ENCODE measurements at regions of chr11 and their contacts with region 1.

Region 1: GRCh38 chr11:87352759-87353707 is 315.3 kb downstream of the TMEM135 start:
- DNase-seq: peak; percentile 13
- H3K4me3 ChIP-seq: no peak overlapping the region
- H3K27me3 ChIP-seq: no peaks in the 10 kb centered on the region; the same call in 1 of the 2 replicates
- CTCF ChIP-seq: peak; percentile 97

Region 2: GRCh38 chr11:87173185-87174039 is 179.6 kb before region 1 on chr11:
- CTCF ChIA-PET with region 1: no interaction called
- POLR2A ChIA-PET with region 1: no interaction called
- DNase-seq: peak; percentile 37
- H3K4me3 ChIP-seq: no peak overlapping the region
- H3K27me3 ChIP-seq: no peaks in the 10 kb centered on the region
- CTCF ChIP-seq: no peak

Region 3: DNA sequence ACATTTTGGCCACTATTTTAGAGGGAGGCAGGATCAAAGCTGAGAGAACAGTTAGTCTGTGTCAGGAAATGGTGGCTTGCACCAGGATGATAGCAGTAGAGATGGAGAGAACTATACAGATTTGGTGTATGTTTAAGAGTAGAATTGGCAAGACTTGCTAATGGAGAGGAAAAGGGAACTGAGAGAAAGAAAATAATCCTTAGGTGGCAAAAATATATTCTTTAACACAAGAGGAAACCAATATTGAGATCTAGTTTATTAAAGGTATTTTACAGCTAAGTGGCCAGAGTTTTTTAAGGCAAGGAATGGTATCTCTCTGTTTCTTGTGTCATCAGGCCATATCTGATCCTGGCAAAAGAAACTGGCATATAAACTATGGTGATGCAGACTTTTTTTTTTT is 36.5 kb before region 1 on chr11:
- CTCF ChIA-PET with region 1: no interaction called
- POLR2A ChIA-PET with region 1: no interaction called
- DNase-seq: no peak
- H3K4me3 ChIP-seq: no peak overlapping the region
- H3K27me3 ChIP-seq: no peaks in the 10 kb centered on the region
- CTCF ChIP-seq: no peak

Region 4: GRCh38 chr11:87405843-87406242 is 52.8 kb after region 1 on chr11:
- CTCF ChIA-PET with region 1: interaction called, 11 read pairs
- POLR2A ChIA-PET with region 1: no interaction called
- DNase-seq: no peak
- H3K4me3 ChIP-seq: no peak overlapping the region
- H3K27me3 ChIP-seq: no peaks in the 10 kb centered on the region
- CTCF ChIP-seq: no peak

Region 5: DNA sequence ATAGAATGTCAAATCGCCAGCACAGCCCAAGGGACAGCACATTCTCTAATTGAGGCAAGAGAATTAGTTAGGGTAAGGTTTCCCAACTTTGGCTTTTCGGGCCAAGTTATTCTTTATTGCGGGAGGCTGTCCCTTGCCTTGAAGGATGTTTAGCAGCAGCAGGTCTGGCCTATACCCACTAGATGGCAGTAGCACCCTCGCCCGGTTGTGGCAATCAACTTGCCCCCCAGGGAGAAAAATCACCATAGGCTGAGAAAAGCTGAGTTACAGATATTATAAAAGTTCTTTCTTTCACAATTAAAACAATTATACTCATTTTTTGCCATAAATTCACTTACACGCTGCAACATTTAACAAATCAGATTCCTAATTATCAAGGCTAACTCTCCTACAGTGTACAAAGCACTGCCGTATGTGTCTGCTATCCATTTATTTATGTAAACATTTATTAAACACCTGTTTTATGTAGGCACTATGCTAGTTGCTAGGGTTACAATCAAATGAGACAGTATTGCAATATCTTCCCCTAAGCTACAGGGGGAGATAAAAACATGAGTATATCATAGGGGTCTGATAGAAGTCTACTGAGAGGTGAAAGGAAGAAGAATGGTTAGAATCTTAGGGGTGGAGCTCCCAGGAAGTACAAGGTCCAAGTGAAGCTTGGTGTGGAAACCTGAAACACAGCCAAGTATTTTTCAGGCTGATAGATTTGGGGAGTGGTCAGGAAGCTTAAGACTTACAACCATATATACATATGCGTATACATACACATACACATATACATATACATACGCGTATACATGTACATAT is 369.9 kb after region 1 on chr11:
- CTCF ChIA-PET with region 1: interaction called, 19 read pairs
- POLR2A ChIA-PET with region 1: no interaction called
- DNase-seq: no peak
- H3K4me3 ChIP-seq: no peak overlapping the region
- H3K27me3 ChIP-seq: no peaks in the 10 kb centered on the region
- CTCF ChIP-seq: peak; percentile 88

Measured in BJ (cell line).